ENCODE measurements at regions of chr2 and their contacts with region 1.

Region 1: DNA sequence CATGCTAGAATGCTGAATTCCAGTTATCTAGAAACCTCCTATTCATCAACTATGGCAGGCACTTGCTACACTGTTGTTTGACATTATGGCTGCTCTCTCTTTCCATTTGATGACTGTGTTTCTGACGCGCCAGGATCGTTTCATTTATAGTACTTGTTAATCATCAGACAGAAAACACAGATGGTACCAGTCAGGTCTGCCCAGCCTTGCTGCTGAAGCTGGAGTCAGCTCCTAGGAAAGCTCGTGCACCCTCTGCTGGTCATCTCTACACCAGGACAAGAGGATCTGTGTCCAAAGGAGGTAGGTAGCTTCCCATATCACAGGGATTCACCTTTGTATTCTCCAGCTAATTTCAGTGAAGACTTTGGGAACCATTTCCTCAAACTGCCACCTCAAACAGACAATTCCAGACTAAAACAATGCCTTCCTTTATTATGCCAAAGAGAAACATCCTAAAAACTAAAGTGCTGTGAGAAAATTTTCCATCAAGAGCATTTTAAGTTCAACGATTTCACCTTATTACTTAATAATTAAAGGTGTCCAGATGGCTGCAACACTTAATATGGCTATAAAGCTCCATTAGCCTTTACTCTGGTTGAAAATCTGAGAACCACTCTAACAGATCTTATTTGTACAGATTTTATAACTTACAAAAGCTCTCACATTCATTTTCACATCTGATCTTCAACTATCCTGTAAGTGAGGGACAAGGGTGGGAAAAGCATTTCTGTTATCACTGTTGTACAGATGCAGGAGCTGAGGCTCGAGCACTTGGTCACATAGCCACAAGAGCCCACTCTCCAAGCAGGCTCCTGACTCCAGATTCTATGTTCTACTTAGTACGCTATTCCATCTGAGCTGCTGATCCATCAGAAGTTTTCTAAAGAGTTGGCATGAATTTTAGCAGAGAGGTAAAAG is 17.5 kb downstream of the METTL8 start:
- DNase-seq: peak; percentile 78
- H3K4me3 ChIP-seq: no peak overlapping the region
- H3K27ac ChIP-seq: no peak overlapping the region
- H3K4me1 ChIP-seq: peaks cover 4% of the 10 kb centered on the region
- H3K27me3 ChIP-seq: no peaks in the 10 kb centered on the region
- CTCF ChIP-seq: peak; percentile 90

Region 2: DNA sequence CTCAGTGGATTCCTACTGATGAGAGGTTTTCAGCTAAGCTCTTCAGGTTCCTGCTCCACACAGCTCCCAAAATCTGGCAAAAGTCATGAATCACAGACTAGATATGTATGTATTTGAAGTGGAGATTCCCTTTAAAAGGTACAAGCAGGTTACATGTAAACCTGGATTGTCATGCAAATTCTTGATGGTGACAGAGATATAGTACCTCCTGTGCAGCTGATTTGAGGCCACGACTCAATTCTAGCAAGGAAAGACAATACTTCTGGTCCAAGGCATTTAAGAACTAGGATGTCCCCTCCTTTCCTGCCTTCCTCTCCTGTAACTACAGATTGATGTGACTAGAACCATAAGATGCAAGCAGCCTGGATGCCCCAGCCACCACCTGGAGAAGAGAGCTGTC is 432.2 kb before region 1 on chr2:
- intact Hi-C with region 1: loop called (anchors 10 kb)
- DNase-seq: no peak
- H3K4me3 ChIP-seq: no peak overlapping the region
- H3K27ac ChIP-seq: no peak overlapping the region
- H3K4me1 ChIP-seq: no peaks in the 10 kb centered on the region
- H3K27me3 ChIP-seq: no peaks in the 10 kb centered on the region
- CTCF ChIP-seq: no peak

Measured in left ventricle myocardium inferior (tissue), 1 donor.